Dorsolateral prefrontal cortex (tissue), 120 donors: ENCODE measurements at regions of chr2 and their contacts with region 1.

Region 1: DNA sequence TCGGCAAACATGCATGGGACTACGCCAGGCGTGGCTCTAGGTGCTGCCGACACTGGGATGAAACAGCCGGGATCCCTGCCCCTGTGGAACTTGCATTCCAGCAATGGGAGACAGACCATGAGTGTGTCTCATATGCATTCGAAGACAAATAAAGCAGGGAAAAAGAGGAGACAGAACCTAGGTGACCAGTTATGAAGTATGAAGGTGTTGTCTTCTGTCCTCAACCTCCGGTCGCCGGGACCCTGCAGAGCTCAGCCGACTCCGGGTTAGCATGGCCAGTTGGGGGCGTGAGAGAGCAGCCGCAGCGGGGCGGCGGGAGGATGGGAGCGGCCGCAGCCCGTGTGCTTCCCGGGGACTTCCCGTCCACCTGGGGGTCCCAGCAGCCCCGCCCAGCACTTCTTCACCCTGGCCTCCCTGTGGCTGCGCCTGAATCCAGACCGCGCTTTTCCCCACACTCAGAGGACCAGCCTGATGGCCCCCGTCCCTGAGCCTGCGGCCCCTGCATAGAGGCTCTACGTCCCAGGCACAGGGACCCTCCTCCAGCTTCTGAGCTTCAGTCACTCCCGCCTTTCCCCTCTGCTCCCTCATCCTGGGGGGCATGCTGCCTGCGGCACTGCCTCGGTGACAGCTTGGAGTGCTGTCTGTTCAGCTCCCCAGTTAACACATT is 11.4 kb downstream of the ID2 start:
- DNase-seq: peak in 4 of 10 donors; percentile 23 to 72 (median 48)
- H3K4me3 ChIP-seq: peak overlapping the region in 57 of 59 donors; percentile 5 to 62 (median 46)
- H3K27ac ChIP-seq: peak overlapping the region in 1 of 59 donors; percentile 54
- H3K27me3 ChIP-seq: peaks cover 0 to 4% (median 0%) of the 10 kb centered on the region in 45 donors
- CTCF ChIP-seq: peak; percentile 27 to 81 (median 70)

Region 2: DNA sequence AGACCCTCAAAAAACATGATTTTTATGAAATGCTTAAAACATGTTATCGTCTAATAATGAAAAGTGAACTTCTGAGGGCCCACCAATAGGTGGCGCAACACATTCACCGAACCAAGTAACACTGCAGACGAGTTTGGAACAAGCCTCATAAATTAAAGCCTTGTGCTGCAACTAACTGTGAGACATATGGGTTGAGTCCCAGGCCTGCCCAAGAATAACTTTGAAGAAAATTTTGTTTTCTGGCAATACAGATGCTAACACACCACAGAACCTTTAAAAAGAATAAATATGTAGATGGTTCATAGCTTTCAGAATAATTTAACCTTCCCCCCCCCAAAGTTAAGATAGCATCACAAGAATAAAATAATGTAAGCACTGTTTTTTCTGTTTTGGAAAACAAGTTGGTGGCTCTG is 1490.2 kb before region 1 on chr2:
- intact Hi-C with region 1: loop called (anchors 5 to 10 kb)
- DNase-seq: peak in 7 of 10 donors; percentile 49 to 79 (median 61)
- H3K4me3 ChIP-seq: no peak overlapping the region
- H3K27ac ChIP-seq: peak overlapping the region in 9 of 59 donors; percentile 6 to 53 (median 31)
- H3K27me3 ChIP-seq: no peaks in the 10 kb centered on the region
- CTCF ChIP-seq: peak; percentile 75 to 99 (median 90)

Region 3: GRCh38 chr2:8761529-8762164 is 68.4 kb after region 1 on chr2:
- intact Hi-C with region 1: loop called (anchors 2 to 5 kb)
- DNase-seq: no peak
- H3K4me3 ChIP-seq: no peak overlapping the region
- H3K27ac ChIP-seq: no peak overlapping the region
- H3K27me3 ChIP-seq: no peaks in the 10 kb centered on the region
- CTCF ChIP-seq: peak; percentile 39 to 89 (median 69)